ENCODE measurements at regions of chr2 and their contacts with region 1.

Region 1: GRCh38 chr2:163345908-163346573 is 389.8 kb downstream of the FIGN start:
- DNase-seq: peak in 1 of 5 donors; percentile 10
- ATAC-seq: no peak
- H3K4me3 ChIP-seq: no peak overlapping the region
- H3K27ac ChIP-seq: no peak overlapping the region
- H3K4me1 ChIP-seq: peaks cover 0 to 17% (median 6%) of the 10 kb centered on the region in 12 donors
- H3K27me3 ChIP-seq: no peaks in the 10 kb centered on the region
- CTCF ChIP-seq: peak; percentile 64 to 91 (median 82)
- POLR2A ChIP-seq: no peak

Region 2: DNA sequence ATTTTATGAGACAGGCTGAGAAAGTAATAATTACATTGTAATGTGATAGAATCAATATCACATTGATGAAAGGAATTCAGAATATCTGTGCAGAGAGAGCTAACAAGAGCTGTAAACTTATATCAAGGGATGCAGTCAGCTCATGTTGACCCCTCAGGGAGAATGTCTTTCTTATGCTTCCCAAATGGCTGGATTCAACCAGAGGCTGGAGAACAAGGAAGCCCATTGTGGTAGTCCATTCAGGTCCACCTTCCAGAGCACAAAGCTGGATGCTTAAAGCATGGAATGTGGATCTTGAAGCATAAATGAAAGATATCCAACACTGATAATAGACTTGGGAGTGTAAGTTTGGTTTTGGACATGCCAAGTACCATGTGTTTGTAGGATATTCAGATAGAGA is 169.8 kb after region 1 on chr2:
- intact Hi-C with region 1: no loop called
- DNase-seq: no peak
- ATAC-seq: no peak
- H3K4me3 ChIP-seq: no peak overlapping the region
- H3K27ac ChIP-seq: no peak overlapping the region
- H3K4me1 ChIP-seq: no peaks in the 10 kb centered on the region
- H3K27me3 ChIP-seq: no peaks in the 10 kb centered on the region
- CTCF ChIP-seq: no peak
- POLR2A ChIP-seq: no peak

Region 3: DNA sequence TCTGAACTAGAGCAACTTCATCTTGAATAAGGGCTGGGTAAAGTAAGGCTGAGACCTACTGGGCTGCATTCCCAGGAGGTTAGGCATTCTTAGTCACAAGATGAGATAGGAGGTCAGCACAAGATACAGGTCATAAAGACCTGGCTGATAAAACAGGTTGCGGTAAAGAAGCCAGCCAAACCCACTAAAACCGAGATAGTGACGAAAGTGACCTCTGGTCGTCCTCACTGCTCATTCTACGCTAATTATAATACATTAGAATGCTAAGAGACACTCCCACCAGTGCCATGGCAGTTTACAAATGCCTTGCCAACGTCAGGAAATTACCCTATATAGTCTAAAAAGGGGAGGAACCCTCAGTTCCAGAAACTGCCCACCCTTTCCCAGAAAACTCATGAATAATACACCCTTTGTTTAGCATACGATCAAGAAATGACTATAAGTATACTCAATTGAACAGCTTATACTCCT is 280.6 kb after region 1 on chr2:
- intact Hi-C with region 1: no loop called
- DNase-seq: peak in 1 of 5 donors; percentile 25
- ATAC-seq: peak; percentile 15 to 71 (median 54)
- H3K4me3 ChIP-seq: no peak overlapping the region
- H3K27ac ChIP-seq: peak overlapping the region in 4 of 12 donors; percentile 12 to 48 (median 26)
- H3K4me1 ChIP-seq: peaks cover 0 to 12% (median 0%) of the 10 kb centered on the region in 12 donors
- H3K27me3 ChIP-seq: no peaks in the 10 kb centered on the region
- CTCF ChIP-seq: no peak
- POLR2A ChIP-seq: no peak

Region 4: DNA sequence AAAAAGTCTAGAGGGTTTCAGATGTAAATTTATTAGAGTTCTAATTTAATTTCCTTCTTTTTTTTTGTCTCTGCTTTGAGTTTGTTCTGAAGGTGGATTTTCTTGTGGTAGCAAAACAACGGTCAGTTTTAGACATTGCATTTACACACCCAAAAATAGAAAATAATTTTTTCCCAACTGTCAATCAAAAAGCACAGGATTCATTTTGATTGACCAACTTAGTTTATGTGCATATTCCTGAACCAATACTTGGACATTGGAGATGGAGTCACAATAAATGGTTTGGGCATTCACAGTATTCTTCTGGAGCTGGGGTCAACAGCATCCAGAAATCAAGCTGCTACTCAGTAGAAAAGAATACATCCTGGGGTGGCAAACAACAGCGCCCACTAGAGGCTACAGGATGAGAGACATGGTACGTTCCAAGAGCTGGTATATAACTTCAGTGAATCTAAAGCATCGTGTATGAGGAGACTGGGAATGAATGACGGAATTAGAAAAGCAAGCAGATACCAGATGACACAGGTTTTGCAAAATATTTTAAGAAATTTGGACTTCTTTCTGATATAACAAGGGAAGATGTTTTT is 532.6 kb after region 1 on chr2:
- intact Hi-C with region 1: loop called in 2 of 10 experiments (anchors 5 to 10 kb)
- DNase-seq: no peak
- ATAC-seq: no peak
- H3K4me3 ChIP-seq: no peak overlapping the region
- H3K27ac ChIP-seq: no peak overlapping the region
- H3K4me1 ChIP-seq: peaks cover 0 to 15% (median 2%) of the 10 kb centered on the region in 12 donors
- H3K27me3 ChIP-seq: no peaks in the 10 kb centered on the region
- CTCF ChIP-seq: peak in 7 of 12 donors; percentile 20 to 49 (median 33)
- POLR2A ChIP-seq: no peak

Region 5: GRCh38 chr2:164061129-164061746 is 715.2 kb after region 1 on chr2:
- intact Hi-C with region 1: loop called in 9 of 10 experiments (anchors 5 to 10 kb)
- DNase-seq: peak in 1 of 5 donors; percentile 28
- ATAC-seq: peak in 1 of 4 donors; percentile 49
- H3K4me3 ChIP-seq: no peak overlapping the region
- H3K27ac ChIP-seq: no peak overlapping the region
- H3K4me1 ChIP-seq: no peaks in the 10 kb centered on the region
- H3K27me3 ChIP-seq: no peaks in the 10 kb centered on the region
- CTCF ChIP-seq: peak; percentile 36 to 70 (median 58)
- POLR2A ChIP-seq: no peak

Region 6: DNA sequence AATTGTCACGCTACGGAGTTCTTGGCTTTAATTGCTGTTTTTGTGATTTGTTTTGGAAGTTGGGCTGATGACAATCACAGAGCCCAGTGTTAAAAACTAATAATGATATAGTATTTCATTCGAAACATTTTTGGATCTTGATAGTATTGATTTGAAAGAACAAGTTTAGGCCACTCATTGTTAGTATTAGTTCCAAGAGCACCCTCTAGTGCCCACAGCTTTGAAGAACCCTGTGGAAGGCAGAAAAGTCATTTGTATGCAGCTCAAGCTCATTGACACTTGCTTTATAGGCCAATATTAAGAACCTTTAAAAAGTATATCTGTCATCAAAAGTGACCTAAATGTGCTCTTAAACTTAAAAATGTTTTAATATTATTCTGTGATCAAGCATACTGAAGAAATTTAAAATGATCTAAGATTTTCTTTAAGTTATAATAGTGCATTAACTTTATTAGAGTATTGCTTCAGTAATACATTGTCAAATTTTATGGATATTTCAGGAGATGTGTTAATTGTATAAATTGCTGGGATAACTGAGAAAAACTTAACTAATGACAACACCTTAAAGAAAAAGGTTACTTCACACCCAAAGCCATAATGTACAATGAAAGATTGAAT is 1084.2 kb after region 1 on chr2:
- intact Hi-C with region 1: loop called in 9 of 10 experiments (anchors 2 to 10 kb)
- DNase-seq: no peak
- ATAC-seq: no peak
- H3K4me3 ChIP-seq: no peak overlapping the region
- H3K27ac ChIP-seq: no peak overlapping the region
- H3K4me1 ChIP-seq: no peaks in the 10 kb centered on the region
- H3K27me3 ChIP-seq: peaks cover 0 to 6% (median 0%) of the 10 kb centered on the region in 9 donors
- CTCF ChIP-seq: peak; percentile 38 to 70 (median 53)
- POLR2A ChIP-seq: no peak